Vagina (tissue), 2 donors: ENCODE measurements at regions of chr3 and their contacts with region 1.

Region 1: GRCh38 chr3:169662132-169662842 is 1.2 kb downstream of the MECOM start:
- DNase-seq: no peak
- H3K4me3 ChIP-seq: peak overlapping the region; percentile 61 to 70
- H3K27ac ChIP-seq: peak overlapping the region; percentile 80
- H3K4me1 ChIP-seq: peaks cover 30% of the 10 kb centered on the region
- H3K27me3 ChIP-seq: no peaks in the 10 kb centered on the region
- CTCF ChIP-seq: peak in 1 of 3 experiments; percentile 35
- POLR2A ChIP-seq: no peak

Region 2: DNA sequence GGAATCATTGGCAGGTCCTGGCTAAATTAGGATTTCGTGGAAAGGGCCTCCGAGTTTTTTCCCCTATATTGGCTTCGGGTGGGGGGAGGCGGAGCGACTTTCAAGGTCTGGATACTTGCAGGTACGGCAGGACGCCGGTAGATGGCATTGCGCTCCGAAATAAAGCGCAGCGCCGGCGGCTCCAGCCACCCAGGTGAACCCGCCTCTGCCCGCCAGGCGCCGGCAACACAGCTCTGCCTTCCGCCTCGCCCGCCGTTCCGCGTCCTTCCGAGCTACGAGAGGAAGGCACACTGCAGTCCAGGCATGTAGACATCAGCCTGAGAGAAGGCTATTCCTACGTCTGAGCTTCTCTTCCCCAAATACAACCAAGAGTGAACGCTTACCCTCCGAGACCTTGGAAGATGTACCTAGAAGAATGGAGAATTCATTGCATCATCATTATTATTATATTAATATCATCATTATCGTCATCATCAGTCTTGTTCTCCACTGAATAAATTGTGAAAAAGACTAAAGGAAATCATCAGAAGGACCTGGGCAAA is 512.9 kb before region 1 on chr3:
- intact Hi-C with region 1: loop called (anchors 2 kb)
- DNase-seq: no peak
- H3K4me3 ChIP-seq: peak overlapping the region; percentile 20 to 35
- H3K27ac ChIP-seq: no peak overlapping the region
- H3K4me1 ChIP-seq: no peaks in the 10 kb centered on the region
- H3K27me3 ChIP-seq: peaks cover 4% of the 10 kb centered on the region
- CTCF ChIP-seq: peak in 2 of 3 experiments; percentile 64 to 72
- POLR2A ChIP-seq: no peak